ENCODE measurements at regions of chrX and their contacts with region 1.

Region 1: DNA sequence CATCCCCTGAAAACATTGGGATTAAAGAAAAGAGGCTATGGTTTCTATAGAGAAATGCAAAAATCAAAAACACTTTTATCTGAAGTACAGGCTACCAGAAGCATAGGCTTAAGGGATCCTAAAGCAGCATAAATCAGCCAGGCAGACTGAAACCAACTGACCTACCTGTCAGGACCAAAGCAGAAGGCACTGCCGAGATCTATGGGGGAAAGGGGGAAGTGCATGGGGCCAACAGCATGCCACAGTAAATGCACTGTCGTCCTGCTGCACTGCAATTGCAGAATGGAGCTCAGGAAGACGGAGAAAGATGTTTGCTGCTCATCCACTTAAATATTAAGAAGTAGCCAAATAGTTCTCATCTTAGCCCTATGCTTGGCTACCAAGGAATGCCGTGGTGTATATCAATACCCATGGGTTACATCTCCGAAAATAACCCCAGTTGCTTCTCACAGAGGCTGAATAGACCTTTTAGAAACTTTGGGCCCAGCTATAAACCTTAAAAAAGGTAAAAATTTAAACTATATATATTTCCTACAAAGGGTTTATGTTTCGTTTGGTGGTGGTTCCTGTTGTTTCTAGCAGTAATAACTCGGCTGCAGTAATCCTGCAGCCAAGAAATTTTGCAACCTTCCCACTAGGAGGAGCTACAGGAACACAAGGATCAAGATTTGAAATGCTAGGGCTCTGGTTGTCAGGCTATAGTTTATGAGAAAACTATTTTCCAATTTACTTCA is 312.2 kb upstream of the DIAPH2 start:
- DNase-seq: peak in 5 of 7 donors; percentile 16 to 48 (median 18)
- H3K4me3 ChIP-seq: no peak overlapping the region
- H3K27ac ChIP-seq: no peak overlapping the region
- H3K4me1 ChIP-seq: no peaks in the 10 kb centered on the region
- H3K27me3 ChIP-seq: peaks cover 6% of the 10 kb centered on the region
- CTCF ChIP-seq: peak; percentile 44 to 69 (median 54)
- POLR2A ChIP-seq: no peak

Region 2: DNA sequence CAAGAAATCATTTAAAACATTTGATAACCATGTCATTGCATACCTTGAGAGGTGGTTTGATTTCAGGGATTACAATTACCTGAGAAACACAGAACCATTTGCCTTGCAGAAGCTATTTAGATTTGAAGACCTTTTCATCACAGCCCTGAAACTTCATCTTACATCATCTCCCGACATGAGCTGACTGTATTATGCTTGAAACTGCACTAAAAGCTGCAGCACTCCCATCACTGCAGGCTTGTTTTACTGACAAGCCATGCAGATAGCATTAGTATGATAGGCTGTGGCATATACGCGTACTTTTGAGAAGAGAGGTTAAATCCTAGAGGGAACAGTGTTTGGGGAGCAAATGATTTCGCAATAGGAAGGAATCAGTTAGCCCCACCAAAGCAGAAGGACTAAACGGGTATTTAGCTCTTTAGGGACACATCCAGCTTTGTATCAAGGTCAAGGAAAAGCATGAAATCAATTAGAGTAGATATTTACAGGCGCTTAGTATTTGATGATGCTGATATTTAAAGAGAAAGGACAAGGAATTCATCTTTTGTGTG is 178.9 kb after region 1 on chrX:
- intact Hi-C with region 1: no loop called
- DNase-seq: no peak
- H3K4me3 ChIP-seq: no peak overlapping the region
- H3K27ac ChIP-seq: no peak overlapping the region
- H3K4me1 ChIP-seq: no peaks in the 10 kb centered on the region
- H3K27me3 ChIP-seq: peaks cover 18% of the 10 kb centered on the region
- CTCF ChIP-seq: no peak
- POLR2A ChIP-seq: no peak

Region 3: DNA sequence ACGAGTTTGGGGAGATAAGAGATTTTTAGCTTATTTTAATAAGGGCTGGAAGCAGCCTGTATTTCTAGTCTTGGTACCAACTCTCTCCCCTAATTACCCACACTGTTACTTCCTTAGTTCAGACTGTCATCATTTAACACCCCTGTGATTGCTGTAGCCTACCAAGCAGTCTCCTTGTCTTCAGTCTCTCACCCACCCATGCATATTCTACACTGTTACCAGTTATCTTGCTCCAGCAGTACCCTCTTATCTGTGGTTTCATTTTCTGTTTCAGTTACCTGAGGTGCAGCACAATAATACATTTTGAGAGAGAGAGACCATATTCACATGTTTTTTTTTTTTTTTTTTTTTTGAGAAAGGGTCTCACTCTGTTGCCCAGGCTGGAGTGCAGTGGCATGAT is 392.4 kb after region 1 on chrX:
- intact Hi-C with region 1: loop called in 1 of 2 experiments (anchors 5 kb)
- DNase-seq: no peak
- H3K4me3 ChIP-seq: no peak overlapping the region
- H3K27ac ChIP-seq: no peak overlapping the region
- H3K4me1 ChIP-seq: no peaks in the 10 kb centered on the region
- H3K27me3 ChIP-seq: peaks cover 8% of the 10 kb centered on the region
- CTCF ChIP-seq: no peak
- POLR2A ChIP-seq: no peak